Activated T-helper 2 cell treated with anti-CD3 and anti-CD28 coated beads, Interferon-gamma antibody, Interleukin-2, Interleukin-4, amounts not matched to agents 10 μg/mL and 5 μg/mL and 100 μg/mL, durations not matched to agents 14 hours and 24 hours and 36 hours (primary cell): ENCODE measurements at regions of chr12 and their contacts with region 1.

Region 1: DNA sequence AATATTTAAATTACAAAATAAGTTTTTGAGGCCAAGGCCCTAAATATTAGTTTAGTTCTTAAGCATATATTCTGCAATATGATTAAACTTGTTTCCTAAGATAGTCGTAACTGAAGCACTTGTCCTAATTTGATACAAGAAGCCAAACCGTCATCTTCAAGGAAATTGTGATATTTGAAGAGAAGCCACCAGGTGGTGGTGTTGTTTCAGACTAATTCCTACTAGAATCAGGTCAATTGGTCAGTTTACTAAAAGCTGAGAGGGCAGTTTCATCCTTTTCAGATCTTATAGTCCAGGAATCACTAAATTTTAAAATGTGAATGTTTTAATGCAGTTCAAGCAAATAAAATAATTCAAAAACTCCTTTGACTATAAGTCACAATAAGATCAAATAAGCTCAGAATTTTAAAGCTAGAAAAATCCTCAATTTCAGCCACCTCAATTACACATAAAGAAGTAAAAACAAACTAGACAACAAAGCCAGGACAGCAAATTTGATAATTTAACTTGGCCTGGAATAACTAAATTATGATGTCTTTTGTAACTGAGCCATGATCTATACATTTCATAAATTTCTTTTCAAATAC is 7.1 kb upstream of the ARL1 start:
- DNase-seq: no peak
- H3K4me3 Mint-ChIP-seq: no peak overlapping the region
- H3K27ac Mint-ChIP-seq: no peak overlapping the region
- H3K4me1 Mint-ChIP-seq: no peaks in the 10 kb centered on the region
- H3K27me3 Mint-ChIP-seq: peaks cover 18% of the 10 kb centered on the region

Region 2: DNA sequence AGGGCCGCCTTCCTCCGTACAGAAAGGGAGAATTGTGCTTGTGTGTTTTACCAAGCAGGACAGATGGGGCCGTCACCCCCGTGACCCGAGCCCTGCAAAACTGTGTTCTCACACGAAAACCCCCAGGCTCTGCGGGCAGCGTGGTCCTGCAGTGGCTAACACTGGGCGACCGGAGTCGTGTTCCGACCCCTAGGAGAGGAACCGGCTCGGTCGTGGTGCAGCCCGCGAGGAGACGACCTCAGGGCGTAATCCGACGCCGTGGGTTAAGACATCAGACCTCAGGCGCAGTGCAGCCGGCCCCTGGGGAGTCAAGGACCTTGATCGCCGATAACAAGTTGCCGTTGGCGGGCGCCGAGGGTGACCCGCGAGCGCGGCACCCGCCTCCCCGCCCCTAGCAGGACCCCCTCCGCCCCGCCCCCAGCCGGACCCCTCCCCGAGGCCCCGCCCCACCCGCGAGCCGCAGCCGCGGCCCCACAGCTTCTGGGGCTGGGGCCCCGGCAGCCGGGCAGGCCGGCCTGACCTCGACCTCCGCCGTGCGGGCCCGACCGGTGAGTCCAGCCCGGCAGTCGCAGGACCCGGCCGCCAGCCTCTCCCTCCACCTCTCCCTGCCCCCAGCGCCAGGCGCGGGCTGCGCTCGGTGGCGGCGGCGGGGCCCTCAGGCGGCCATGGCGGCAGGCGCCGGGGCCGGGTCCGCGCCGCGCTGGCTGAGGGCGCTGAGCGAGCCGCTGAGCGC is 282.7 kb after region 1 on chr12 and contains the start of gene CHPT1:
- intact Hi-C with region 1: loop called (anchors 2 kb)
- DNase-seq: peak; percentile 46
- H3K4me3 Mint-ChIP-seq: peak within 1 kb of the TSS; percentile 87
- H3K27ac Mint-ChIP-seq: peak within 1 kb of the TSS; percentile 73
- H3K4me1 Mint-ChIP-seq: peaks cover 19% of the 10 kb centered on the region
- H3K27me3 Mint-ChIP-seq: peaks cover 6% of the 10 kb centered on the region
- total RNA-seq, gene CHPT1: 17.6 and 18.3 TPM in 2 replicates

Region 3: DNA sequence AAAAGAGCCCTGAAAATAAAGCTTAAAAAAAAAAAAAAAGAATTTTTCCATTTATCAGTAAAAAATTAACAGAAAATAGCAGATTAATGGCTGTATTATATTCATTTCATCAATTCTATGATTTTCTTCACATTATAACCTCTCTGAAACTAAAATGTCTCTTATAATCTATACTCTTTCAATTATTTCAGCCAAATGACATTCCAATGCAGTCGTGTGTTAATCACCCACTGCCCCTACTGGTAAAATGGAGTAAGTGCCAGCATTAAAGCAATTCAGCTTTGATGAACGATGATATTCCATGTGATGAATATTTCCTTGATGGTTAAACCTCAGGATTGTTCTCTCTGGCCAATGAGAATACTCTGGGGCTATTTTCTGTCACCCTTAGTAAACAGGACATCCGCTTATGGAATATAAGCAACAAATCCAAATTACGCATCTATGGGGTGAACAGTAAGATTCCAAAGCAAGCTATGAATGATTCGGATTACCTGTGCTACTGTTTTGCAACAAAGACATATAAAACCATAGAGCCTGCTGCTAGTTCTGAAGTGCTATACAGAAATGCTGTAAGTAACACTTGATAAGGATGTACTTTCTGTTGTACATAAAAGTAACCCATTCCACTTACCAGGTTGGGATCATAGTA is 344.9 kb after region 1 on chr12:
- intact Hi-C with region 1: loop called (anchors 5 kb)
- DNase-seq: no peak
- H3K4me3 Mint-ChIP-seq: no peak overlapping the region
- H3K27ac Mint-ChIP-seq: no peak overlapping the region
- H3K4me1 Mint-ChIP-seq: peaks cover 4% of the 10 kb centered on the region
- H3K27me3 Mint-ChIP-seq: no peaks in the 10 kb centered on the region

Region 4: DNA sequence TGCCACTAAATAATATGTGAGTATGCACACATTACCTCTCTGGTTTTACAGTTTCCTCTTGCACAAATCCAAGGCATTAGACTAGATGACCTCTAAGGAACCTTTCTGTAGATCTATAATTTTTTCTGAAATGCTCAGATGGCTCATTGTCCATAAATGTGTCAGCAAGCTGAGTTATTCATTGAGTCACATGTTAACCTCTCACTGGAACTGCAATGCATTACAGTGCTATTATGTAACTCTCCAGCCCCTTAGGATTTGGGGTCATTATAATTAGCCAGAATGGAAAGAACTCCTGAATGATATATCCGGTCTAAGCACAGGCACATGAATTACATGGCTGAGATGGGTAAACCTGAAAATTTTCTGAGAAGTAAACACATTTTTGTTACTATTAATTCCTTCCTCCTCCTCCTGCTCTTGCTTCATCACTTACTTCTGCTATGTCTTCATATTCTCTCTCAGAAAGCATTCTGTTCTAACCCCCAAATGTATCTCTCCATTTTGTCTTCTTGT is 442.5 kb after region 1 on chr12:
- intact Hi-C with region 1: no loop called
- DNase-seq: no peak
- H3K4me3 Mint-ChIP-seq: no peak overlapping the region
- H3K27ac Mint-ChIP-seq: no peak overlapping the region
- H3K4me1 Mint-ChIP-seq: peaks cover 38% of the 10 kb centered on the region
- H3K27me3 Mint-ChIP-seq: no peaks in the 10 kb centered on the region